ENCODE measurements at regions of chr9 and their contacts with region 1.

Region 1: DNA sequence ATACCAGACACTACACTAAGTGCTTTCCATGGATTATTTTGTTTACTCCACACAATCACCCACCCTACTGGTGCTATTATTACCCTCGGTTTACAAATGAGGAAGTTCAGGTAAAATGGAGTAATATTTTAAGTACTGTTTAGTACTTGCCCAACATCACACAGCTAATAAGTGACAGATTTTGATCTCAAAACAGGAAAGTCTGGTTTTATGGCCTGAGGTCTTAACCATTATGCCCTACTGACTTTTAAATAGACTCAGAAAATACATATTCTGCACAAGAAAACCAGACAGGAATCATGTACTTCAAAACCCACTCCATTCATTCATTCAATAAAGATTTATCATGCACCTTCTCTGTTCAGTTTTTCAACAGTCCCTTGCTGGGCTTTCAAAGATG is 431.0 kb upstream of the TLE4 start:
- DNase-seq: no peak
- ATAC-seq: no peak
- H3K4me3 ChIP-seq: no peak overlapping the region
- H3K27ac ChIP-seq: no peak overlapping the region
- H3K4me1 ChIP-seq: no peaks in the 10 kb centered on the region
- H3K27me3 ChIP-seq: no peaks in the 10 kb centered on the region
- CTCF ChIP-seq: no peak
- EP300 ChIP-seq: no peak
- POLR2A ChIP-seq: no peak
- RAD21 ChIP-seq: no peak

Region 2: GRCh38 chr9:79080536-79080935 is 60.2 kb before region 1 on chr9:
- CTCF ChIA-PET with region 1: no interaction called
- POLR2A ChIA-PET with region 1: no interaction called
- RAD21 ChIA-PET with region 1: no interaction called
- SMC1A ChIA-PET with region 1: no interaction called
- in situ Hi-C with region 1: no loop called
- intact Hi-C with region 1: loop called (anchors 10 kb)
- DNase-seq: no peak
- ATAC-seq: no peak
- H3K4me3 ChIP-seq: no peak overlapping the region
- H3K27ac ChIP-seq: no peak overlapping the region
- H3K4me1 ChIP-seq: no peaks in the 10 kb centered on the region
- H3K27me3 ChIP-seq: no peaks in the 10 kb centered on the region
- CTCF ChIP-seq: no peak
- EP300 ChIP-seq: no peak
- POLR2A ChIP-seq: no peak
- RAD21 ChIP-seq: no peak